ENCODE measurements at regions of chr4 and their contacts with region 1.

Region 1: DNA sequence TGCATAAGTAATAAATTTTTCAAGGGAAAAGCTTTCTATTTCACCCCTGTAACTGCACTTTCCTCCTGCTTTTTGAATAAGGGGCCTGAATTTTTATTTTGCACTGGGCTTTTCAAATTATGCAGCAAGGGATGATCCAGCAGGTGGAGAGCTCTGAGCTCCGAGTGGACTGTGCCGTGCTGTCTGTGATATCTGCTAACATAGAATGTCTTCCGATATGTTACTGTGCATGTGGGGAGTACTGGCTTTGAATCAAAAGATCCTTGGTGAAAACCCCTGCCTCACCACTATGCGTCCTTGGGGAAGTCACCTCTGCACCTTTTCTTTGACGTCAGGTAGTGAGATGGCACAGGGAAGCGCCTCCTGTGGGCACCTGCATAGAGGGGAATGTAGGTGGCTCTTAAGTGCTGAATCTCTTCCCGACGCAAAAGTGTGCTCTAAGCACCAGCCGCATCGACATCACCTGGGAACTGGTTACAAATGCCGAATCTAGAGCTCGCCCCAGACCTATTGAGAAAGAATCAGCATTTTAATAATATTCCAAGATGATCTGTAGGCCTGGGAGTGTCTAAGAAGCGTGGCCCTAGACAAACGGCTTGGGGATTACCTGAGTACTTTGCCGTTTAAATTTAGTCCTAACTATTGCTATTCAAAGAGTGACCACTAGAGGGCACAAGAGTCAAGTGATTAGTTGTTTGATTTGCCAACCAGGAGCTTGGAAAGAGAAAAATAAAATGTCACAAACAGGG is 19.2 kb upstream of the WFS1 start:
- DNase-seq: peak; percentile 83
- H3K4me3 Mint-ChIP-seq: no peak overlapping the region
- H3K27ac Mint-ChIP-seq: no peak overlapping the region
- H3K4me1 Mint-ChIP-seq: peaks cover 1% of the 10 kb centered on the region
- H3K27me3 Mint-ChIP-seq: peaks cover 37% of the 10 kb centered on the region

Region 2: GRCh38 chr4:5982156-5982973 is 268.0 kb before region 1 on chr4:
- intact Hi-C with region 1: no loop called
- DNase-seq: no peak
- H3K4me3 Mint-ChIP-seq: no peak overlapping the region
- H3K27ac Mint-ChIP-seq: no peak overlapping the region
- H3K4me1 Mint-ChIP-seq: no peaks in the 10 kb centered on the region
- H3K27me3 Mint-ChIP-seq: peaks cover 18% of the 10 kb centered on the region

Region 3: GRCh38 chr4:5998333-5998936 is 252.0 kb before region 1 on chr4:
- intact Hi-C with region 1: loop called (anchors 10 kb)
- DNase-seq: peak; percentile 82
- H3K4me3 Mint-ChIP-seq: no peak overlapping the region
- H3K27ac Mint-ChIP-seq: no peak overlapping the region
- H3K4me1 Mint-ChIP-seq: peaks cover 6% of the 10 kb centered on the region
- H3K27me3 Mint-ChIP-seq: peaks cover 2% of the 10 kb centered on the region

Region 4: GRCh38 chr4:6546681-6547447 is 296.5 kb after region 1 on chr4:
- intact Hi-C with region 1: loop called (anchors 2 kb)
- DNase-seq: peak; percentile 87
- H3K4me3 Mint-ChIP-seq: no peak overlapping the region
- H3K27ac Mint-ChIP-seq: no peak overlapping the region
- H3K4me1 Mint-ChIP-seq: peaks cover 2% of the 10 kb centered on the region
- H3K27me3 Mint-ChIP-seq: peaks cover 2% of the 10 kb centered on the region

Measured in activated CD4-positive, alpha-beta T cell treated with anti-CD3 and anti-CD28 coated beads, Interleukin-2, amount 10 ng/mL, durations not matched to agents 24 days and 14 days (primary cell).